Activated B cell treated with CpG ODN at 0.5 μM for 24 hours (primary cell): ENCODE measurements at regions of chrX and their contacts with region 1.

Region 1: DNA sequence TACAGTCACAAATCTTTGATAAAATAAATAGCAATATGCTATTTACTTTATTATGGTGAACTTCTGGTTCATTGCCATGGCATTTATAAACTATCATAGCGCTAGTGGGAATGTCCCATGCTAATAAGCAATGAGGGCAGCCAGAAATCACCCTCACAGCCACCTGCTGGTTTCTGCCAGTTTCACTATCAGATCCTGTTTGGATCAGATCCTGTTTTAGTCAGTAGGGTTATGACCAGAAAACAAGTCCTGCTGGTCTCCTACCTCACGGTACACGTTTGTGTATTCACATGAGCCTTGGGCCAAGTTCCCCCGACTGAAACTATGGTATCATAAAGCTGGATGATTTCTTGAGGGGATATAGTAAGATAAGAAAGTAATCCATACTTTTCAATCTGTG is 17.7 kb downstream of the FOXR2 start:
- DNase-seq: no peak
- ATAC-seq: peak; percentile 71
- H3K4me3 Mint-ChIP-seq: no peak overlapping the region
- H3K27ac Mint-ChIP-seq: peak overlapping the region; percentile 18
- H3K4me1 Mint-ChIP-seq: peaks cover 9% of the 10 kb centered on the region
- H3K27me3 Mint-ChIP-seq: no peaks in the 10 kb centered on the region
- CTCF ChIP-seq: no peak

Region 2: DNA sequence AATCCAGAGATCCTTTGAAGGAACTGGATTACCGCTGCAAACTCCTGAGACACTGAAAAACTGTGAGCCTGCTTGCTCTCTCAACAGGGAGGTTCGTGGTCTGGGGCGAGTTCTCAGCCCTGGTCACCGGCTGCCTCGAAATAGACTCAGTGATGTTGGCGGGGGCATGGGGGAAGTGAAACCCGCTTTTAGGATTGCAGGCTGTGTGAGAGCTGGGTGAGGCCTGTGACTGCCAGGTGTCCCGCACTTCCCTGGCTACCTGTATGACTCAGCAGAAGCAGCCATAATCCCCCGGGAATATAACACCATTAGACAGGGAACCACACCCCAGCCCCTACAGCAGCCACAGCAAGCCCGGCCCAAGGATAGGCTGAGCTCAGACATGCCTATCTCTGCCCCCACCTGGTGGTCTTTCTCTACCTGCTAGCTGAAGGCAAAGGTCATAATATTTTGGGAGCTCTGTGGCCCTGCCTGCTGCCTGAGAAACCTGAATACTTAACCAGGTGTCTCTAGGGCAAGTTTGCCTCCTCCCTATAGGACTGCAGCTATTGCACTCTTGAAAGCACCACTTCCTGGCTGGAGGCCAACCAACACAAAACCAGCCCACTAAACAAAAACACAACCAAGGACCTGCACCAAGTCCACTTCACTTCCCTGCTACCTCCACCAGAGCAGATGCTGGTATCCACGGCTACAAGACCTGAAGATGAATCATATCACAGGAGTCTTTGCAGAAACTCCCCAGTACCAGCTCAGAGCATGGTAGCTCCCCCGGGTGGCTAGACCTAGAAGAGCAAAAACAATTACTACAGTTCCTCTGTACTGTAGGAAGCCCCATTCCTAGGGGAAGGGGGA is 278.7 kb after region 1 on chrX:
- CTCF ChIA-PET with region 1: no interaction called
- POLR2A ChIA-PET with region 1: no interaction called
- intact Hi-C with region 1: loop called (anchors 10 kb)
- DNase-seq: peak; percentile 50
- ATAC-seq: peak; percentile 88
- H3K4me3 Mint-ChIP-seq: peak overlapping the region; percentile 52
- H3K27ac Mint-ChIP-seq: peak overlapping the region; percentile 79
- H3K4me1 Mint-ChIP-seq: peaks cover 38% of the 10 kb centered on the region
- H3K27me3 Mint-ChIP-seq: no peaks in the 10 kb centered on the region
- CTCF ChIP-seq: no peak